ENCODE measurements at regions of chr20 and their contacts with region 1.

Region 1: DNA sequence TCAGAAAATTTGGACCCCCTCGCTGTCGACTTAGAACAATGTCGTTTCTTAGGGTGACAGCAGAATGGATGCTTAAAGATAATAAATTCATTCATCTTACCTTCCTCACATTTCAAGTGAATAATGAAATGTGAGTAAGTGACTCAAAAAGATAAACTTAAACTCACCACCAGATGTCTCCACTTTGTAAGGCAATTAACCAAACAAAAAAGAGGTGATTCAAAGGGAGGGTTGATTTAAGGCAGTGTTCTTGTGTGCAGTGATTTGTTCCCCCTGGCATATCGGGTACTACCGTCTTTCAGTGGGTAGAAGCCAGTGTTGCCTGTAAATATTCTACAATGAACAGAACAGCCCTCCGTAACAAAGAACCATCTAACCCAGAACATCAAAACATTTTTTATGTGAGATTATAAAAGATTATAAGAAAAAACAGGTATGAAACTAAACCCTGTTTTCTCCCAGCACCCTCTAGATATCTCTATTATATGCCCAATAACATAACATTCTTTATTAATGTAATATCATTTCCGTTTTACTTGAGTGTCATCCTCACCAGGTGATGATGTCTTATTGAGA is 589.7 kb downstream of the CBLN4 start:
- DNase-seq: peak; percentile 8
- ATAC-seq: no peak
- H3K4me3 ChIP-seq: no peak overlapping the region
- H3K27ac ChIP-seq: no peak overlapping the region
- H3K4me1 ChIP-seq: no peaks in the 10 kb centered on the region
- H3K27me3 ChIP-seq: no peaks in the 10 kb centered on the region
- CTCF ChIP-seq: peak; percentile 36; the same call in 1 of the 2 replicates

Region 2: GRCh38 chr20:55569084-55569483 is 153.4 kb after region 1 on chr20:
- CTCF ChIA-PET with region 1: no interaction called
- POLR2A ChIA-PET with region 1: no interaction called
- in situ Hi-C with region 1: no loop called
- intact Hi-C with region 1: no loop called
- DNase-seq: no peak
- ATAC-seq: no peak
- H3K4me3 ChIP-seq: no peak overlapping the region
- H3K27ac ChIP-seq: no peak overlapping the region
- H3K4me1 ChIP-seq: no peaks in the 10 kb centered on the region
- H3K27me3 ChIP-seq: no peaks in the 10 kb centered on the region
- CTCF ChIP-seq: no peak

Region 3: GRCh38 chr20:56171087-56172012 is 755.7 kb after region 1 on chr20:
- CTCF ChIA-PET with region 1: no interaction called
- POLR2A ChIA-PET with region 1: no interaction called
- in situ Hi-C with region 1: no loop called
- intact Hi-C with region 1: loop called (anchors 10 kb)
- DNase-seq: no peak
- ATAC-seq: peak; percentile 75
- H3K4me3 ChIP-seq: no peak overlapping the region
- H3K27ac ChIP-seq: no peak overlapping the region
- H3K4me1 ChIP-seq: no peaks in the 10 kb centered on the region
- H3K27me3 ChIP-seq: no peaks in the 10 kb centered on the region
- CTCF ChIP-seq: peak; percentile 65

Measured in Panc1 (cell line).